HCT116 (cell line): ENCODE measurements at regions of chr13 and their contacts with region 1.

Region 1: GRCh38 chr13:90526711-90527110 is 820.8 kb upstream of the MIR17HG start:
- DNase-seq: no peak
- ATAC-seq: no peak
- H3K4me3 ChIP-seq: no peak overlapping the region
- H3K27ac ChIP-seq: no peak overlapping the region
- H3K4me1 ChIP-seq: no peaks in the 10 kb centered on the region
- H3K27me3 ChIP-seq: no peaks in the 10 kb centered on the region
- CTCF ChIP-seq: no peak
- POLR2A ChIP-seq: no peak
- RAD21 ChIP-seq: no peak

Region 2: GRCh38 chr13:90015565-90016507 is 510.9 kb before region 1 on chr13:
- CTCF ChIA-PET with region 1: no interaction called
- POLR2A ChIA-PET with region 1: no interaction called
- RAD21 ChIA-PET with region 1: no interaction called
- intact Hi-C with region 1: loop called (anchors 5 kb)
- DNase-seq: no peak
- ATAC-seq: no peak
- H3K4me3 ChIP-seq: no peak overlapping the region
- H3K27ac ChIP-seq: no peak overlapping the region
- H3K4me1 ChIP-seq: no peaks in the 10 kb centered on the region
- H3K27me3 ChIP-seq: no peaks in the 10 kb centered on the region
- CTCF ChIP-seq: no peak
- POLR2A ChIP-seq: no peak
- RAD21 ChIP-seq: no peak